Panc1 (cell line): ENCODE measurements at regions of chr12 and their contacts with region 1.

Region 1: DNA sequence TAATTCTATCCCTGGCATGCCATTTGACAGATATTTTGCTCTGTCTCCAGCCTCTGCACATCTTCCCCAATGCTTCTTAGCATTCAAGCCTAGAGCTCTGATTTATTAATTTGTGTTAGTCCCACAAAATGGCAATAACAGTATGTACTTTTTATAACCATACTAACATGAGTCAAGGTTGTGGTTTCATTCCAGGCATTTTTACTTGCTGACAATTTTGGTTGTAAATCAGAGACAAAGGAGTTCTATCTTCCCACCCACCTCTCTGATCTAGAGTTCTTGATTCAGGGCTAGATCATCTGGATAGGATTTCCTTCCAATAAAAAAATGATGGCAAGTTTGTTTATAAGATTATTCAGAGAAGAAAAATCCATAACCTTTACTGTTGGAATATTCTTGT is 18.5 kb upstream of the CISTR start:
- DNase-seq: peak; percentile 91
- ATAC-seq: peak; percentile 93
- H3K4me3 ChIP-seq: no peak overlapping the region
- H3K27ac ChIP-seq: peak overlapping the region; percentile 98
- H3K4me1 ChIP-seq: peaks cover 51% of the 10 kb centered on the region
- H3K27me3 ChIP-seq: no peaks in the 10 kb centered on the region
- CTCF ChIP-seq: no peak

Region 2: GRCh38 chr12:53825246-53826081 is 55.2 kb after region 1 on chr12:
- CTCF ChIA-PET with region 1: no interaction called
- POLR2A ChIA-PET with region 1: interaction called, 7 read pairs
- in situ Hi-C with region 1: no loop called
- intact Hi-C with region 1: loop called (anchors 2 kb)
- DNase-seq: peak; percentile 95
- ATAC-seq: peak; percentile 96
- H3K4me3 ChIP-seq: no peak overlapping the region
- H3K27ac ChIP-seq: peak overlapping the region; percentile 99
- H3K4me1 ChIP-seq: peaks cover 87% of the 10 kb centered on the region
- H3K27me3 ChIP-seq: no peaks in the 10 kb centered on the region
- CTCF ChIP-seq: no peak